B cell (primary cell): ENCODE measurements at regions of chr1 and their contacts with region 1.

Region 1: GRCh38 chr1:156608036-156608674 is 6.9 kb upstream of the GPATCH4 start:
- DNase-seq: peak; percentile 86
- ATAC-seq: peak; percentile 81
- H3K4me3 ChIP-seq: no peak overlapping the region
- H3K4me3 Mint-ChIP-seq: peak overlapping the region; percentile 71
- H3K27ac ChIP-seq: no peak overlapping the region
- H3K27ac Mint-ChIP-seq: peak overlapping the region; percentile 81
- H3K4me1 ChIP-seq: peaks cover 22 to 28% of the 10 kb centered on the region in 2 donors
- H3K4me1 Mint-ChIP-seq: peaks cover 26% of the 10 kb centered on the region
- H3K27me3 ChIP-seq: peaks cover 0 to 10% (median 3%) of the 10 kb centered on the region in 4 experiments
- H3K27me3 Mint-ChIP-seq: peaks cover 10% of the 10 kb centered on the region
- CTCF ChIP-seq: peak; percentile 80

Region 2: GRCh38 chr1:155105604-155106022 is 1502.5 kb before region 1 on chr1:
- CTCF ChIA-PET with region 1: no interaction called
- POLR2A ChIA-PET with region 1: no interaction called
- intact Hi-C with region 1: no loop called
- DNase-seq: no peak
- ATAC-seq: no peak
- H3K4me3 ChIP-seq: no peak overlapping the region
- H3K4me3 Mint-ChIP-seq: no peak overlapping the region
- H3K27ac ChIP-seq: no peak overlapping the region
- H3K27ac Mint-ChIP-seq: no peak overlapping the region
- H3K4me1 ChIP-seq: no peaks in the 10 kb centered on the region
- H3K4me1 Mint-ChIP-seq: no peaks in the 10 kb centered on the region
- H3K27me3 ChIP-seq: no peaks in the 10 kb centered on the region
- H3K27me3 Mint-ChIP-seq: no peaks in the 10 kb centered on the region
- CTCF ChIP-seq: no peak

Region 3: DNA sequence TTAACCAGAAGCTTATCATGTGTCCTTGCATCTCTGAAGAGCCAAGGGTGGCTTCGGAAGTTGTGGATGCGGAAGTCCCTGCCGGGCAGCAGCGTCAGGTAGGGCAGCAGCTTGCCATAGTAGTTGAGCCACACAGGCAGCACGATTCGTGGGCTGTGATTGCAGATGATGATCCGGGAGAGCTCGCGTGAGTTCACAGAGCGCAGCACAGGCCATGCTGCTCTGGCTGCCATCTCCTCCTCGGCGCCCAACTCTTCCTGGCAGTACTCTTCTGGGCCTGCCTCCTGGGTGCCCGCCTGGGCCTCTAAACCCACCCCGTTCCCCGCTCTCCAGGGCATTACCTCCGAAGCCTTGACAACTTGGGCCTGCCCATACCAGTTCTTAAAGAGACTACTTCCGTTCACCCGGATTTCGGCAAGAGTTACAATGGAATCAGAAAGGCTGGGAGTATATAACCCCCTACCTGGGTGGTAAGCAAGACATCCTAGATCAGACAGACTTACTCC is 309.2 kb before region 1 on chr1 and contains the start of gene VHLL:
- CTCF ChIA-PET with region 1: no interaction called
- POLR2A ChIA-PET with region 1: no interaction called
- intact Hi-C with region 1: no loop called
- DNase-seq: no peak
- ATAC-seq: no peak
- H3K4me3 ChIP-seq: no peak within 1 kb of the TSS
- H3K4me3 Mint-ChIP-seq: no peak within 1 kb of the TSS
- H3K27ac ChIP-seq: no peak within 1 kb of the TSS
- H3K27ac Mint-ChIP-seq: no peak within 1 kb of the TSS
- H3K4me1 ChIP-seq: peaks cover 12 to 16% of the 10 kb centered on the region in 2 donors
- H3K4me1 Mint-ChIP-seq: peaks cover 14% of the 10 kb centered on the region
- H3K27me3 ChIP-seq: peaks cover 0 to 2% (median 0%) of the 10 kb centered on the region in 4 experiments
- H3K27me3 Mint-ChIP-seq: no peaks in the 10 kb centered on the region
- CTCF ChIP-seq: no peak
- total RNA-seq, gene VHLL: 0.49 TPM in 1 of 2 replicates, not detected in the other

Region 4: DNA sequence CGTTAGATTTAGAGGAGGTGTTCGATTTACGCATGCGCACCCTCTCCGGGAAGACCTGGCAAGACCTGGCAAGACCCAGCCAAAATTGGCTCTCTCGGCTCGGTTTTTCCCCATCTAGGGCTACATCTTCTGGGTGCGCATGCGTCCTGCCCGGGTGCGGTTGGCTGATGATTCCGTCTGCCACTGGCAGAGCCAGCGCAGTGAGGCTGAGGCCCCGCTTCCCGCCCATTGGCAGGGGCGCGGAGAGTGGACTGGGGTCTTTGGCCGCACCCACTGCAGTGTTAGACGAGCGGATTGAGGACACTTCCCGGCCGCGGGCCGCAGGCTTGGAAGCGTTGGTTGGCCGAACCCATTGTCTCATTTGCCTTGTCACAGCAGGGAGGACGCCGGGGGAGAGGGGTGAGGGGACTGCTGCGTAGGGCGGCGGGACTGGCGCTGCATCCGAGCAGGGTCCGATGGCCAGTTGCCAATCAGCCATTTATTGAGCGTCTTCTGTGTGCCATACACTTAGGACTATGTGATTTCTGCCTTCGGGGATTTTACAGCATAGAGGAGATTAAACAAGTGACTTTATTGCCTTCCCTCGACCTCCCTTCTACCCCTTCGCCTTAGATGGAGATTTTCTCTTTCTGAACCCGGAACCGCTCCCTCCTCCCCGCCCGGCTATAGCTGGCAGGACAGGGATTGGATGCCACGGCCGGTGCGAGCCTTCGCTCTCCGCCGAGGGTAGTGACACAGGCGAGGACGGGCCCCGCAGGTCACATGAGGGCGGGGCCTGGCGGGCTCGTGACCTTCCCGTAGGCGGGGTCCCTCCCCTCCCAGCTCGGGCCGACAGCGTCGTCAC is 151.3 kb before region 1 on chr1:
- CTCF ChIA-PET with region 1: interaction called, 30 read pairs
- POLR2A ChIA-PET with region 1: no interaction called
- intact Hi-C with region 1: loop called (anchors 1 kb)
- DNase-seq: peak; percentile 98
- ATAC-seq: peak; percentile 85
- H3K4me3 ChIP-seq: peak overlapping the region; percentile 41 to 87 (median 84)
- H3K4me3 Mint-ChIP-seq: peak overlapping the region; percentile 96
- H3K27ac ChIP-seq: peak overlapping the region; percentile 97 to 100
- H3K27ac Mint-ChIP-seq: peak overlapping the region; percentile 98
- H3K4me1 ChIP-seq: peaks cover 3 to 15% of the 10 kb centered on the region in 2 donors
- H3K4me1 Mint-ChIP-seq: peaks cover 17% of the 10 kb centered on the region
- H3K27me3 ChIP-seq: no peaks in the 10 kb centered on the region
- H3K27me3 Mint-ChIP-seq: no peaks in the 10 kb centered on the region
- CTCF ChIP-seq: no peak

Region 5: GRCh38 chr1:156489166-156489934 is 118.8 kb before region 1 on chr1:
- CTCF ChIA-PET with region 1: interaction called, 66 read pairs
- POLR2A ChIA-PET with region 1: no interaction called
- intact Hi-C with region 1: no loop called
- DNase-seq: peak; percentile 49
- ATAC-seq: no peak
- H3K4me3 ChIP-seq: peak overlapping the region in 2 of 5 experiments; percentile 7 to 30
- H3K4me3 Mint-ChIP-seq: peak overlapping the region; percentile 90
- H3K27ac ChIP-seq: peak overlapping the region; percentile 72 to 94
- H3K27ac Mint-ChIP-seq: peak overlapping the region; percentile 96
- H3K4me1 ChIP-seq: peaks cover 83 to 93% of the 10 kb centered on the region in 2 donors
- H3K4me1 Mint-ChIP-seq: peaks cover 91% of the 10 kb centered on the region
- H3K27me3 ChIP-seq: no peaks in the 10 kb centered on the region
- H3K27me3 Mint-ChIP-seq: no peaks in the 10 kb centered on the region
- CTCF ChIP-seq: no peak

Region 6: DNA sequence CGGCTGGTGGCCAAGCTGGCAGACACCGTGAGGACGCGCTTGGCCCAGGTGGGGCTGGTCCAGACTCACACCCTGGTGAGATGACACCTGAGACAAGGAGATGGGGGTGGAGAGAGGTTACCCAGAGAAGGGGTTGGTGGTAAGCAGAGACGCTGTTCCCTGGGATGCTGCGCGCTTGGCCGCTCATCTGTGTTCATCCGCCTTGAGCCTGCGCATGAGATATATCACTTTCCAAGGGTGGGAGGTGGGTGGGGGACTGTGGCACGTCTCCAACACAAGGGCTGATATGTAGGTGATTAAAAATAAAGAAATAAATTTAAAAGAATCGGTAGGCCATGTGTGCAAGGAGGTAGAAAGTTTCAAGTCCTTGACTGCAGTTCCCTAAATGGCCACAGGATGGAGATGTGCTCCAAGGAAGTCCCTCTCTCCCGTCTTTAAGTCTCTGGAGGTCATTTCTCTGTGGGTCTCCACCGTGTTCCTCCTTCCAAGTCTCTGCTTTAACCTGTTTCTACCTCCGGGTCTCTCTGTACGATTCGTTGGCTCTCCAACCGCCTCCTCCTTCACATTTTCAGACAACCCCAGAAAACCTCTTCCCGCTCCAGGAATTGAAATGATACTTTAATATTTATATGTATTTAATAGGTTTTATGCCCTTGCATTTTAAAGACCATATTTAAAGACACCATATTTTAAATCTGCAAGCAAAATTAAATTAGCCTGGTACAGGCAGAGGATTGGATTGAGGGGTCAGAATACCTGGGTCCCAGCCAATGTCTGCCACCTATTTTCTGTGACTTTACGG is 24.1 kb before region 1 on chr1:
- CTCF ChIA-PET with region 1: interaction called, 52 read pairs
- POLR2A ChIA-PET with region 1: interaction called, 6 read pairs
- intact Hi-C with region 1: loop called (anchors 1 kb)
- DNase-seq: peak; percentile 88
- ATAC-seq: peak; percentile 60
- H3K4me3 ChIP-seq: peak overlapping the region in 1 of 5 experiments; percentile 64
- H3K4me3 Mint-ChIP-seq: peak overlapping the region; percentile 15
- H3K27ac ChIP-seq: peak overlapping the region; percentile 88 to 94
- H3K27ac Mint-ChIP-seq: peak overlapping the region; percentile 76
- H3K4me1 ChIP-seq: peaks cover 26 to 36% of the 10 kb centered on the region in 2 donors
- H3K4me1 Mint-ChIP-seq: peaks cover 32% of the 10 kb centered on the region
- H3K27me3 ChIP-seq: no peaks in the 10 kb centered on the region
- H3K27me3 Mint-ChIP-seq: no peaks in the 10 kb centered on the region
- CTCF ChIP-seq: peak; percentile 94

Region 7: DNA sequence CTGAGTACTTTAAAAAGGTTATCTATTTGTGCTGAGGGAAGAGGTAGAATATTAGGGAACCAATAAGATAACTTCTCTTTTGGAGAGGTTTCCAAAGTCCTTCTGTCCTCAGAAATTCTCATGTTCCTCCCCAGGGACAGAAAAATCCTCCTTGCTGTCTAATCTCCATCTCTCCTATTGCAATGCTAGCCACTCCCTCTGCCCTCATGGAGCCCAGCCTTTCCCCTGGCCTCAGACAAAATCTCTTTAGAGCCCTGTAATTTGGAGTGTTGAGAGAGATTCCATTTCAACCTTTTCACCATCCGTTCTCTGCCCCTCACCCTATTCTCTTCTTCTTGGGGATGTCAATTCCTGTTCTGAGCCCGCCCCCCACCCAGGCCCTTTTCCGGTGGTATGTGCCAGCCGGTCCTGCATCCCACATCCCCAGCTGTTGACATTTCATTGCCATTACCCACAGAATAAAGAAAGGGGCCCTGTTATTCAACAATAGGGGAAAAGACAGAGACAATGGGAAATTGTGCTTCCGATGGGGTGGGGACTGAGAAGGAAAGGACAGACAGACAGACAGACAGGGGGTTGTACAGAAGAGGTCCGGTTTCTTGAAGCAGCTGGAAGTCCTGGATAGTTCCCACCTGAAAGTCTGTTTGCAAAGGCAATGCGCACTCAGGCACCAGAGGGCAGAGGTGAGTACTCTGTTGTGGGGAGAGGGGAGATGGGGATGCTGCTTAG is 10.9 kb after region 1 on chr1 and contains the start of gene HAPLN2:
- CTCF ChIA-PET with region 1: interaction called, 12 read pairs
- POLR2A ChIA-PET with region 1: interaction called, 3 read pairs
- intact Hi-C with region 1: no loop called
- DNase-seq: peak; percentile 39
- ATAC-seq: peak; percentile 49
- H3K4me3 ChIP-seq: no peak within 1 kb of the TSS
- H3K4me3 Mint-ChIP-seq: no peak within 1 kb of the TSS
- H3K27ac ChIP-seq: no peak within 1 kb of the TSS
- H3K27ac Mint-ChIP-seq: no peak within 1 kb of the TSS
- H3K4me1 ChIP-seq: peaks cover 4 to 6% of the 10 kb centered on the region in 2 donors
- H3K4me1 Mint-ChIP-seq: peaks cover 4% of the 10 kb centered on the region
- H3K27me3 ChIP-seq: peaks cover 0 to 66% (median 24%) of the 10 kb centered on the region in 4 experiments
- H3K27me3 Mint-ChIP-seq: peaks cover 65% of the 10 kb centered on the region
- CTCF ChIP-seq: peak; percentile 33
- total RNA-seq, gene HAPLN2: 0.36 TPM in 1 of 2 replicates, not detected in the other